ENCODE measurements at regions of chr5 and their contacts with region 1.

Region 1: DNA sequence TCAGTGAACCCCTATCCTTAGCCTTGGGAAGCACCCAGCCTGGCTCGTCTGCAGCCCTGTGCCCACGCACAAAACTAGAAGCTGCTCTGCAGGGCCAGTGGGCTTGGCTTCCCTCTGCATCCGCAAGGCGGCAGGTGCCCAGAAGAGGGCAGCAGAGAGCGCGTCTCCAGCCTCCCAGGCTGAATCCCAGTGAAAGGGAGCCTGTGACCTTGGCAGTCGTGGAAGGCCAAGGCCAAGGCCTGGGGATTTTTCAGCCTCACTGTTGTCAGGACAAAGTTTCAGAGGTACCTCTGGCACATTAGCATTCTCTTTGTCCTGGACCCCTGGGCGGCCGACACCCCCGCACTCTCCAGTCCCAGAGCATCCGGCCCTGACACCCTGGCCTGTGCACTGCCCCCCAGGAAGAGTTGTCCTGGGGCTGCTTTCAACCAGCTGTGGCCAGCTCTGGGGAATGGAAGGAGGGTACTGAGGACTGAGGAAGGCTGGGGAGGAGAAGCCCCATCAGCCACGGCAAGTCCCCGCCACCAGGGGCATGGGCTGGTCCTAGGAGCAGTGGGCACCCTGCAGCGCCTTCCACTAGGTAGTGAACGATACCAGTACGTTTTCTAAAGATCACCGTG is 63.6 kb upstream of the IL17B start:
- DNase-seq: peak; percentile 82 to 91
- ATAC-seq: peak; percentile 91 to 95 (median 92)
- H3K4me3 ChIP-seq: no peak overlapping the region
- H3K27ac ChIP-seq: peak overlapping the region; percentile 73
- H3K4me1 ChIP-seq: peaks cover 22% of the 10 kb centered on the region
- H3K27me3 ChIP-seq: no peaks in the 10 kb centered on the region
- CTCF ChIP-seq: peak; percentile 93

Region 2: DNA sequence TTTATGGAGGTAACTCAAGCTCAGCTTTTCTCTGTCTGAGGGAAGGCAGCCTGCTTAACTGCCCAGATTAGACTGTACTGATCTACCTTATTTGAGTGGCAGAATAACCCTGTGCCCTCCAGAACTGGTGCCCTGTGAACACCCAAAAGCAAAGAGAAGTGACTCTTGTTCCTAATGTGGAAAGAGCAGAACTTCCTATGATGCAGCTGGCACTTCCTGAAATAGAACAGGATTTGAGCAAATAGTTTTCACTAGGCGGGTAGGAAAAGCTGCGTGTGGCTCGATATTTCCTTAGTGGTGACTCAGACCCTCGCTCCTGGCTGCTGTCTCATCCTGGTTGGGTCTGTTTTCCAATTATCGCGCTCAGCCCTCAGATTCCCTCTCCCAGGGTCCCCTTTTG is 469.7 kb before region 1 on chr5:
- intact Hi-C with region 1: no loop called
- DNase-seq: peak; percentile 36 to 66
- ATAC-seq: peak; percentile 75 to 85 (median 78)
- H3K4me3 ChIP-seq: peak overlapping the region; percentile 28
- H3K27ac ChIP-seq: peak overlapping the region; percentile 89
- H3K4me1 ChIP-seq: peaks cover 59% of the 10 kb centered on the region
- H3K27me3 ChIP-seq: no peaks in the 10 kb centered on the region
- CTCF ChIP-seq: no peak

Region 3: DNA sequence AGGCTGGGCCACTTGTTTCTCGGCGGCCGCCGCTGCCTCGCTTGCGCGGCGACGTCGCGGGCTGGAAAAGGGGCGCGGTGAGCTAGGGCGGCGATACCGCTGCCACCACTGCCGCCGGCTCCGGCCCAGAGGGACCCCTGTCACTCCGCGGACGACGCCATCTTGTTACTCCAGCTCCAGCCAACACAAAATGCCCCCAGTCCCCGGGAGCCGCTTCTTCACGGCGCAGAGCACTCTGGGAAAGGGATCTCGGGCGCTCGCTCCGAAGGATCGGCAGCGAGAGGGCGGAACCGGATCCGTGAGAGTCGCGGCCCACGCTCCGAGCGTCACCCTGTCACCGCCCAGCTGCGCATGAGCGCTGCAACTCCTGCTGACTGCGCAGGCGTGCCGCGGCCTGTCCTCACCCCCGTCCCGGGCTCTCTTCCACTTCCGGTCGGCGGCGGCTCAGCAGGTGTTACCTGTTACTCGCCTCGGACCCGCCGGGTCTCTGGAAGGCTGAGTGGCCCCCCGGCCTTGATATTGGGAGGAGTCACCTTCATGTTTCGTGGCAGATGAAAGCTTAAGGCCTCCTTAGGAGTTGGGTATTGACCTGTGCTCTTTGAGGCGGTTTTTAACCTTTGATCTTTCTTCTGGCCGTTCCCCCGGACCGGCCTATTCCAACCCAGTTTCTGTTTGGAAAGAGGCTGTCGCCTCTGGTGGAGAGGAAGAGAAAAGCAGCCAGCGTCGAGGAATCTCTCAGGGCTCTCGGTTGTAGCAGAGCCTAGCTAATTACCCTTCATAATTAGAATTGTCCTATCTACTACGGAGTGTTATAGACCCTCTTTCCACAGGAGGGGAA is 108.7 kb after region 1 on chr5 and contains the start of gene CSNK1A1:
- intact Hi-C with region 1: loop called in 1 of 2 experiments (anchors 2 kb)
- DNase-seq: peak; percentile 99
- ATAC-seq: peak; percentile 92 to 95 (median 94)
- H3K4me3 ChIP-seq: peak within 1 kb of the TSS; percentile 91
- H3K27ac ChIP-seq: peak within 1 kb of the TSS; percentile 99
- H3K4me1 ChIP-seq: peaks cover 33% of the 10 kb centered on the region
- H3K27me3 ChIP-seq: no peaks in the 10 kb centered on the region
- CTCF ChIP-seq: peak; percentile 90
- total RNA-seq, gene CSNK1A1: 139 to 394 (median 224) TPM

Region 4: GRCh38 chr5:149561848-149562247 is 119.2 kb after region 1 on chr5:
- intact Hi-C with region 1: loop called in 1 of 2 experiments (anchors 5 kb)
- DNase-seq: no peak
- ATAC-seq: peak; percentile 92 to 96 (median 94)
- H3K4me3 ChIP-seq: peak overlapping the region; percentile 30
- H3K27ac ChIP-seq: peak overlapping the region; percentile 83
- H3K4me1 ChIP-seq: peaks cover 31% of the 10 kb centered on the region
- H3K27me3 ChIP-seq: no peaks in the 10 kb centered on the region
- CTCF ChIP-seq: no peak

Region 5: GRCh38 chr5:149618581-149619251 is 176.0 kb after region 1 on chr5:
- intact Hi-C with region 1: loop called in 1 of 2 experiments (anchors 5 kb)
- DNase-seq: peak in 1 of 2 donors; percentile 69
- ATAC-seq: peak; percentile 69 to 86 (median 79)
- H3K4me3 ChIP-seq: no peak overlapping the region
- H3K27ac ChIP-seq: peak overlapping the region; percentile 14
- H3K4me1 ChIP-seq: peaks cover 24% of the 10 kb centered on the region
- H3K27me3 ChIP-seq: no peaks in the 10 kb centered on the region
- CTCF ChIP-seq: peak; percentile 69

Measured in psoas muscle (tissue), 8 donors.